PC-9 (cell line): ENCODE measurements at regions of chr1 and their contacts with region 1.

Region 1: DNA sequence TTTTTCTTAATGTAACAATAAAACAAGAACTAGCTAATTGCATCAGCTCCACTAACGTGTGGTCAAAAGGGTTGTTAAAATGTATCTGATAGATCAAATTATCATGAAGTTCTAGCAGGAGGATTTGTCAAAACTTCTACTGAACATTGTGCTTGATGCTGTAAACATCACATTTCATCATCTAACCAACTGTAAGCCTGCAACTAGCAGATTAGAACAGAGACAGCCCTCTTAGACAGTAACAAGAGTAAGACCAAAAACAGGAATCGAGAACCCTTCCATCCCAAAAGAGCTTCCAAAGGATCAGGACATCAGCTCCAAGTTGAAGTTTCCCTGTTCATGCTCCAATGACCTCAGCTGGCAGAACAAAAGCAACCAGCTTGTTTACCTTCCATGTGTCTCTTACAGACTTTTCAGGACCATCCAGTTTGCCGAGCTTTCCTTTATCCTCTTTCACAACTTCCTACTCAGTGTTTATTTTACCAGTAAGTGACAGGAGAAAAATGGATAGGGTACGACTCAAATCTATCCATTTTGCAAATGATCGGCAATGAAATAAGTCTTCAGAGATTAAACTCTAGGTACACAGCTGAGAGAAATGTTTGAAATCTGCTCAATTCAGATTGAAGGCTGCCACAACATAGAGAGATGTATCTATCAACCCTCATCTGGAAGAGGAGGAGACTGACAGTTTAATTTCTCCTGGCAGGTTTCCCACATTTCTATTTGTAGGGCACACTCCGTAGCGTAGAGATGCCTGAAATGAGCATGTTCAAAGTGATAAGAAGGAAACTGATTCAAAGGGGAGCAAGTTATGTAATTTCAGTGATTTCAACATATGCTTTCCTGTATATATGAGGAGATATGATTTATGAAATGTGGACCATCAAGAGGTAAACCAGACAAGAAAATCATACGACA is 44.3 kb downstream of the NIBAN1 start:
- DNase-seq: peak; percentile 50 to 95
- H3K4me3 ChIP-seq: peak overlapping the region; percentile 36; the same call in 1 of the 2 replicates
- H3K27ac ChIP-seq: no peak overlapping the region; the same call in 1 of the 2 replicates
- H3K4me1 ChIP-seq: peaks cover 30% of the 10 kb centered on the region
- H3K27me3 ChIP-seq: no peaks in the 10 kb centered on the region
- CTCF ChIP-seq: no peak

Region 2: GRCh38 chr1:184954231-184954995 is 24.4 kb after region 1 on chr1:
- CTCF ChIA-PET with region 1: no interaction called
- POLR2A ChIA-PET with region 1: no interaction called
- intact Hi-C with region 1: loop called (anchors 2 kb)
- DNase-seq: peak; percentile 12 to 70
- H3K4me3 ChIP-seq: 0 out of 2 replicates have a peak overlapping the region, but pooled peaks have one; percentile 3
- H3K27ac ChIP-seq: peak overlapping the region; percentile 55
- H3K4me1 ChIP-seq: peaks cover 21% of the 10 kb centered on the region
- H3K27me3 ChIP-seq: no peaks in the 10 kb centered on the region
- CTCF ChIP-seq: no peak

Region 3: GRCh38 chr1:184992271-184992670 is 62.3 kb after region 1 on chr1:
- CTCF ChIA-PET with region 1: no interaction called
- POLR2A ChIA-PET with region 1: no interaction called
- intact Hi-C with region 1: no loop called
- DNase-seq: no peak
- H3K4me3 ChIP-seq: no peak overlapping the region
- H3K27ac ChIP-seq: no peak overlapping the region
- H3K4me1 ChIP-seq: no peaks in the 10 kb centered on the region
- H3K27me3 ChIP-seq: no peaks in the 10 kb centered on the region
- CTCF ChIP-seq: no peak